Activated T-helper 2 cell treated with anti-CD3 and anti-CD28 coated beads, Interferon-gamma antibody, Interleukin-2, Interleukin-4, amounts not matched to agents 10 μg/mL and 5 μg/mL and 100 μg/mL, durations not matched to agents 14 hours and 24 hours and 36 hours (primary cell): ENCODE measurements at regions of chr11 and their contacts with region 1.

Region 1: DNA sequence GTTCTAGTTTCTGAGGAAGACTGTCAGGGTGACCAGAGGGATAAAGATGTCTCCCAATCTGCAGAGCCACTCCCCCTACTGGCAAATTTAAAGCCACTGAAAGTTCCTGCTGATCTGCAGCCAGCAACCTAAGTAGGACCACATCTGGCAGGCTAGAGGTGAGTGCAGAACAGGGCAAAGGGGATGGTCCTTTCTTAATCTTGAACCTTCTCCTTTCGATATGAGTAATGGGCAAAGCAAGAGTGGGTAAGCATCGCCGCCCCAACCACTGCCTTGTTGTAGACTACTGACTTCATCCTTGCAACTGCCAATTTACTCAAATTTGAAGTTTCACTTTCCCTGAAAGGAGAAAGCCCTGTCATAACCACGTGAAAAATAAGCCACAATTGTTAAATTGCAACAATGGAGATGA is 30.7 kb downstream of the SCUBE2 start:
- DNase-seq: peak; percentile 68
- H3K4me3 Mint-ChIP-seq: no peak overlapping the region
- H3K27ac Mint-ChIP-seq: peak overlapping the region; percentile 14
- H3K4me1 Mint-ChIP-seq: peaks cover 30% of the 10 kb centered on the region
- H3K27me3 Mint-ChIP-seq: peaks cover 19% of the 10 kb centered on the region

Region 2: GRCh38 chr11:8989453-8989852 is 71.3 kb before region 1 on chr11:
- intact Hi-C with region 1: no loop called
- DNase-seq: no peak
- H3K4me3 Mint-ChIP-seq: no peak overlapping the region
- H3K27ac Mint-ChIP-seq: no peak overlapping the region
- H3K4me1 Mint-ChIP-seq: peaks cover 10% of the 10 kb centered on the region
- H3K27me3 Mint-ChIP-seq: peaks cover 18% of the 10 kb centered on the region

Region 3: GRCh38 chr11:9003573-9004309 is 57.0 kb before region 1 on chr11 and contains the start of gene NRIP3:
- intact Hi-C with region 1: loop called (anchors 2 kb)
- DNase-seq: peak; percentile 71
- H3K4me3 Mint-ChIP-seq: peak within 1 kb of the TSS; percentile 75
- H3K27ac Mint-ChIP-seq: peak within 1 kb of the TSS; percentile 23
- H3K4me1 Mint-ChIP-seq: peaks cover 29% of the 10 kb centered on the region
- H3K27me3 Mint-ChIP-seq: peaks cover 51% of the 10 kb centered on the region
- total RNA-seq, gene NRIP3: 5.0 and 5.5 TPM in 2 replicates

Region 4: DNA sequence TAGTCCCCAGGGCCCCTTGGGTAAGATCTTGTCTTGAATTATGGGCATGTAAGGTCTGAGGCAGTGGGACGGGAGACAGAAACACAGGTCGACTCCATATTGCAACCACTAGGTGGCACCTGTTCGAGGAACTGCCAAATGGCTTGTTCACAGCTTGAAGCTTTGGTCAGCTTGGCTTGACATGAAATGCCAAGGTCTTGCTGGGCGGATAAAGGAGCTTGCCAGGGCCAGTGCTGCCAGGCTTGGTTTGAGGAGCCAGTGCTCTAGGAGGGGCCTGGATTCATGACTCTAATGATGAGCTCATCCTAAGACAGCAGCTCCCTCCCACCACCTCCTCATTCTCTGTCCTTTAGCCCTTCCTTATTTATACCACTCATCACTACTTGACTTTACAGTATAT is 45.0 kb before region 1 on chr11:
- intact Hi-C with region 1: loop called (anchors 5 kb)
- DNase-seq: peak; percentile 47
- H3K4me3 Mint-ChIP-seq: no peak overlapping the region
- H3K27ac Mint-ChIP-seq: no peak overlapping the region
- H3K4me1 Mint-ChIP-seq: peaks cover 23% of the 10 kb centered on the region
- H3K27me3 Mint-ChIP-seq: peaks cover 20% of the 10 kb centered on the region

Region 5: GRCh38 chr11:9109939-9110731 is 49.4 kb after region 1 on chr11:
- intact Hi-C with region 1: loop called (anchors 5 kb)
- DNase-seq: no peak
- H3K4me3 Mint-ChIP-seq: no peak overlapping the region
- H3K27ac Mint-ChIP-seq: no peak overlapping the region
- H3K4me1 Mint-ChIP-seq: peaks cover 4% of the 10 kb centered on the region
- H3K27me3 Mint-ChIP-seq: peaks cover 28% of the 10 kb centered on the region

Region 6: DNA sequence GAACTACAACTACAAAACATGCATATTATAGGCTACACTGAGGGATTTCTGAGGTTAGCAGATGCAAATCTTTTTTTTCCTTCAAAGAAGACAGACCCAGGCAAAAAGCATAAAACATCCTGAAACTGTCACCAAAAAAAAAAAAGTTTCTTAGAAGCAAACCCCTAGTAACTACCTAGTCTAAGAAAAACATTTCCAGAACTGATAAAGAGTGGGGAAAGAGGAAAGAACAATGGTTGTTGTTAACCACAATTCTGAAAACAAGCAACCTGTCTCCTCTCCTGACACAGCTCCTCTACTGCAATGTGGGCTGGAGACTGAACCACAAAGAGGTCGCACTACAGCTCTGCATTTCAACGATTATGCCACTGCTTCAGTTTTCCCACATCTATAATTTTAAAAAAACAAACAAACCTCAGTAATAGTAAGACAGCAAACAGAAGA is 189.5 kb after region 1 on chr11:
- intact Hi-C with region 1: loop called (anchors 5 kb)
- DNase-seq: peak; percentile 32
- H3K4me3 Mint-ChIP-seq: peak overlapping the region; percentile 53
- H3K27ac Mint-ChIP-seq: peak overlapping the region; percentile 73
- H3K4me1 Mint-ChIP-seq: peaks cover 51% of the 10 kb centered on the region
- H3K27me3 Mint-ChIP-seq: no peaks in the 10 kb centered on the region